ENCODE measurements at regions of chr6 and their contacts with region 1.

Region 1: DNA sequence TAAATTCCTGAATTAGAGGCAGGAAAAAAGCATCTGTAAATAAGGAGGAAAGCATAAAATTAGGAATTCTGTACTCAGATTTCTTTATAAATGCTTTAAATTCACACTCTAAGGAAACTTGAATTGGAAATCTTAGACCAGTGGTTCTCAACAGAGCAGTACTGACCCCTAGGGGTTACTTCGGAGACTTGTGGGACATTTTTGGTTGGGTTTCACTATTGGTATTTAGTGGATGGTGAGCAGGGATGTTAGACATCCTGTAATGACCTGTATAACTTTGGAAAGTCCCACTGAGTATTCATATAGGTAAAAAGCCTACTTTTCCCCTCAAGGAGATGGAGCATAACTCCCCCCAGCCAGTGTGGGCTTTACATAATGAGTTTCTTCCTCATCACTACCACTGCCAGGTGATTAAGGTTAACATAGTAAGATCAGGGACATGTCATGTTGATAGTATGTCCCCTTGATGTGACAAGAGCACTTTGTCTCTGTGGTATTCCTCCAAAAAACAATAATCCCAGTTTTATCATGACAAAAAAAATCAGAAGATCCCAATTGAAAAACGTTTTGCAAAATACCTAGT is 31.0 kb downstream of the GLO1 start:
- DNase-seq: peak; percentile 70
- ATAC-seq: peak; percentile 68
- H3K4me3 ChIP-seq: no peak overlapping the region
- H3K4me3 Mint-ChIP-seq: no peak overlapping the region
- H3K27ac ChIP-seq: no peak overlapping the region
- H3K27ac Mint-ChIP-seq: peak overlapping the region; percentile 20
- H3K4me1 ChIP-seq: peaks cover 27 to 33% of the 10 kb centered on the region in 2 donors
- H3K4me1 Mint-ChIP-seq: peaks cover 40% of the 10 kb centered on the region
- H3K27me3 ChIP-seq: no peaks in the 10 kb centered on the region
- H3K27me3 Mint-ChIP-seq: no peaks in the 10 kb centered on the region
- CTCF ChIP-seq: peak; percentile 91

Region 2: DNA sequence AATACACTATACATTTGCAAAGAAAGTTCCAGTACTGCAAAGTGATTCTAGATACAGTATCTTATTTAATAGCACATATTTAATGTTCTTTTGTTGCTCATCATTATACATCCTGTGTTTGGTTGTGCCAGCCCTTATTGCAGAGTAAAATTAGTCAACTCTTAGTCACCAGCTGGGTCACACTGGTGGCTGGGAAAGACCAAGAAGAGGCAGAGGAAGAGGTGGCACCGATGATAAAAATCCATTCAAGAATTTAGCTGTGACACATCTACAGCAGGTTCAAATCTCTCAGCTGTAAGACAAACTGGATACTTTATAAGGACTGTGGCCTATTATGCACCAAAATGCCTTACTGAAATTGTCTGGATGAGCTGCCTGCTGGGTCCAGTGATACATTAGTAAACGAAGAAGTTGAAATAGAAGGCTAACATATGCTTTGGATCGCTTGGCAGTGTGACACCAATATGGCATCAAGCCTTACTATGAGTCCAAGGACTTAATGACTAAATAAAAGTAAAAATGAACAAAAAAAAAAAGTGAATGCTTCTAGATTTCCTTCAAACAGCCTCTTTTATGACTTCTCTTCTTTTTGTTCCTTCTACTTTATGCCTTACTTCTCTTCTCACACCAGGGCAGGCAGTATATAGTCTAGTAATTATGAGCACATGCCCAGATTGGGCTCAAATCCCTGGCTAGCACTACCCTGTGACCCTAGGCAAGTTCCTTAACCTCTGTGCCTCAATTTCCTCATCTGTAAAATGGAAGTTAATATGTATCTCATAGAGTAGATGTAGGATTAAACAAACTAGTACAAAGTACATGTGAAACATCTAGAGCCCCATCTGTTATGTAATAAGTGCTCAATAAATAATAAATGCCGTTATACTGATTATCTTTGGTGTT is 1347.6 kb before region 1 on chr6:
- CTCF ChIA-PET with region 1: interaction called, 5 read pairs
- POLR2A ChIA-PET with region 1: no interaction called
- intact Hi-C with region 1: loop called (anchors 10 kb)
- DNase-seq: no peak
- ATAC-seq: no peak
- H3K4me3 ChIP-seq: no peak overlapping the region
- H3K4me3 Mint-ChIP-seq: no peak overlapping the region
- H3K27ac ChIP-seq: no peak overlapping the region
- H3K27ac Mint-ChIP-seq: no peak overlapping the region
- H3K4me1 ChIP-seq: no peaks in the 10 kb centered on the region
- H3K4me1 Mint-ChIP-seq: peaks cover 2% of the 10 kb centered on the region
- H3K27me3 ChIP-seq: no peaks in the 10 kb centered on the region
- H3K27me3 Mint-ChIP-seq: no peaks in the 10 kb centered on the region
- CTCF ChIP-seq: no peak

Region 3: GRCh38 chr6:38639498-38640215 is 32.3 kb before region 1 on chr6 and contains the start of gene BTBD9:
- CTCF ChIA-PET with region 1: interaction called, 3 read pairs
- POLR2A ChIA-PET with region 1: no interaction called
- intact Hi-C with region 1: loop called (anchors 5 kb)
- DNase-seq: peak; percentile 95
- ATAC-seq: peak; percentile 88
- H3K4me3 ChIP-seq: peak within 1 kb of the TSS; percentile 83 to 95 (median 88)
- H3K4me3 Mint-ChIP-seq: peak within 1 kb of the TSS; percentile 81
- H3K27ac ChIP-seq: peak within 1 kb of the TSS; percentile 92 to 99
- H3K27ac Mint-ChIP-seq: peak within 1 kb of the TSS; percentile 89
- H3K4me1 ChIP-seq: peaks cover 18% of the 10 kb centered on the region in 2 donors
- H3K4me1 Mint-ChIP-seq: peaks cover 42% of the 10 kb centered on the region
- H3K27me3 ChIP-seq: no peaks in the 10 kb centered on the region
- H3K27me3 Mint-ChIP-seq: no peaks in the 10 kb centered on the region
- CTCF ChIP-seq: no peak
- total RNA-seq, gene BTBD9: 48.9 and 57.8 TPM in 2 replicates